Posterior cingulate gyrus (tissue), 11 donors: ENCODE measurements at regions of chr4 and their contacts with region 1.

Region 1: GRCh38 chr4:69322055-69322454 is 41.8 kb downstream of the UGT2B28 start:
- DNase-seq: no peak

Region 2: DNA sequence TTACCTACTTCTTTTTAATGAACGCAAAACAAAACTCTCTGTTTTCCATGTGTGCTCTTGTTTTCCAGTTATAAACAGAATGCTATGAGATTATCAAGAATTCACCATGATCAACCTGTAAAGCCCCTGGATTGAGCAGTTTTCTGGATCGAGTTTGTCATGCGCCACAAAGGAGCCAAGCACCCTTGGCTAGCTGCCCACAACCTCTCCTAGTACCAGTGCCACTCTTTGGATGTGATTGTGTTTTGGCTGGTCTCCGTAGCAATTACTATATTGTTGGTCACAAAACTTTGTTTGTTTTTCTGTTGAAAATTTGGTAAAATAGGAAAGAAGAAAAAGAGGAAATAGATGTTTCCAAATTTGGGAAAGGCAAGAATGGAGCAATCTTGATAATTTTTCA is 174.7 kb before region 1 on chr4:
- intact Hi-C with region 1: no loop called
- DNase-seq: no peak

Region 3: GRCh38 chr4:69617083-69617694 is 295.1 kb after region 1 on chr4:
- intact Hi-C with region 1: loop called (anchors 1 kb)
- DNase-seq: no peak

Region 4: GRCh38 chr4:69881173-69881773 is 559.2 kb after region 1 on chr4:
- intact Hi-C with region 1: loop called (anchors 5 kb)
- DNase-seq: peak in 4 of 10 donors; percentile 8 to 70 (median 14)